ENCODE measurements at regions of chr1 and their contacts with region 1.

Region 1: GRCh38 chr1:234583755-234584419 is 26.1 kb downstream of the IRF2BP2 start:
- DNase-seq: peak; percentile 64 to 73
- ATAC-seq: peak; percentile 45 to 57 (median 54)
- H3K4me3 ChIP-seq: peak overlapping the region; percentile 34
- H3K27ac ChIP-seq: peak overlapping the region; percentile 97
- H3K4me1 ChIP-seq: peaks cover 51% of the 10 kb centered on the region
- H3K27me3 ChIP-seq: no peaks in the 10 kb centered on the region
- CTCF ChIP-seq: no peak

Region 2: GRCh38 chr1:234533975-234534876 is 49.7 kb before region 1 on chr1:
- intact Hi-C with region 1: loop called in 1 of 2 experiments (anchors 2 kb)
- DNase-seq: peak; percentile 92 to 94
- ATAC-seq: no peak
- H3K4me3 ChIP-seq: no peak overlapping the region
- H3K27ac ChIP-seq: peak overlapping the region; percentile 98
- H3K4me1 ChIP-seq: peaks cover 84% of the 10 kb centered on the region
- H3K27me3 ChIP-seq: no peaks in the 10 kb centered on the region
- CTCF ChIP-seq: no peak

Region 3: DNA sequence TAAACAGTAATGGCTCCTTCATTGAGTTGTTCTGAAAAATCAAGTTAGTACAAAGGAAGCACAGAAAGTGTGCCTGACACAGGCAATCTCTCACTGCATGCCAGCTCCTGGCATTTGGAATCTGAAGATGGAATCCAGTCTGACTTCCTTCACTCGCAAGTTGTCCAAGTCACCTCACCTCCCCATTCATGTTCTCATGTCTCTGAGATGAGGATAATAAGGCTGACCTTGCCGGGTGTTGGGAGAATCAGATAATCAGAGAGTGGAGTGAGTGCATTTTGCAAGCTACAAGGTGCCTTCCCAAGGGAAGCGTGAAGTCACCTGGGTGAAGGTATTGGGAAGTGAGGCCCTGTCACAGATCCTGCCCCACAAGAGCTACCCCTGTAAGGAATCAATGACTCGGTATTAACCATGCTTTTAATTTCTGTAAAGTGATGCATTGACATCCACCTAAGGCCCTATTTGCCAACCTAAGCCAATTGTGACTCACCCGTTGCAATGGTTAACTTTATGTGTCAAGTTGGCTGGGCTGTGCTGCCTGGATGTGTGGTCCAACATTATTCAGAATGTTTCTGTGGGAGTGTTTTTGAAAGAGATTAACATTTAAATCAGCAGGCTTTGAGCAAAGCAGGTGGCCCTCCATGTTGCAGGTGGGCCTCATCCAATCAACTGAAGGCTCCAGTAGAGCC is 42.5 kb before region 1 on chr1:
- intact Hi-C with region 1: loop called in 1 of 2 experiments (anchors 2 kb)
- DNase-seq: no peak
- ATAC-seq: no peak
- H3K4me3 ChIP-seq: no peak overlapping the region
- H3K27ac ChIP-seq: peak overlapping the region; percentile 98
- H3K4me1 ChIP-seq: peaks cover 93% of the 10 kb centered on the region
- H3K27me3 ChIP-seq: no peaks in the 10 kb centered on the region
- CTCF ChIP-seq: no peak